Ovary (tissue), 10 donors: ENCODE measurements at regions of chr3 and their contacts with region 1.

Region 1: DNA sequence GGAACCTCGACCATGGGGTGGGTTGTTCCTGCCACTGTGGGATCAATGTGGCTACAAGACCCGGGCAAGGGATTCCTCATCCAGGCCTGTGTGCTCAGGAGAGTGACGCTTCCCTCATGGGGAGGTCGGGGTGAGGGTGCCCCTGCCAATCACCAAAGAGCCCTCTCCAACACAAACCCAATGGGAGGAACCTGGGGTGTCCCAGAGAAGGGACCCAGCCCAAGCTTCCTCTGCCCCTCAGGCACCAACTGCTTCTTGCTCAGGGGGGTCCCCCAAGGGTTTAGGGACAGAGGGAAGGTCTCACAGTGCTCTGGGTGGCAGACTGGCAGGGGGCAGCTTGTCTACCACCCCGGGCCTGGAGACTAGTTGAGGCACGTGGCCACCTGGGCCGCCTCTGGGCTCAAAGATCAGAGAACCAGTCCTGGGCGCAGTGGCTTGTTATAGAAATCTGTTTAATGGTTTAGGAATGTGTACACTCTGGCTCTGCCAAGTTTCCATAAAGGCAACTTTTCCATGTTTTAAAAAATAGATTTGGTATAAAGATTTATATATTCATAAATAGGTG is 26.6 kb downstream of the GP9 start:
- DNase-seq: peak; percentile 73 to 77 (median 76)
- H3K4me3 ChIP-seq: no peak overlapping the region
- H3K27ac ChIP-seq: peak overlapping the region; percentile 85 to 90
- H3K4me1 ChIP-seq: peaks cover 6% of the 10 kb centered on the region
- H3K27me3 ChIP-seq: no peaks in the 10 kb centered on the region
- CTCF ChIP-seq: no peak
- EP300 ChIP-seq: no peak
- POLR2A ChIP-seq: no peak

Region 2: GRCh38 chr3:128969993-128970739 is 117.1 kb before region 1 on chr3:
- intact Hi-C with region 1: loop called in 1 of 4 experiments (anchors 5 kb)
- DNase-seq: peak in 4 of 5 donors; percentile 57 to 66 (median 58)
- H3K4me3 ChIP-seq: no peak overlapping the region
- H3K27ac ChIP-seq: no peak overlapping the region
- H3K4me1 ChIP-seq: no peaks in the 10 kb centered on the region
- H3K27me3 ChIP-seq: no peaks in the 10 kb centered on the region
- CTCF ChIP-seq: peak; percentile 74 to 88 (median 78)
- EP300 ChIP-seq: no peak
- POLR2A ChIP-seq: no peak

Region 3: DNA sequence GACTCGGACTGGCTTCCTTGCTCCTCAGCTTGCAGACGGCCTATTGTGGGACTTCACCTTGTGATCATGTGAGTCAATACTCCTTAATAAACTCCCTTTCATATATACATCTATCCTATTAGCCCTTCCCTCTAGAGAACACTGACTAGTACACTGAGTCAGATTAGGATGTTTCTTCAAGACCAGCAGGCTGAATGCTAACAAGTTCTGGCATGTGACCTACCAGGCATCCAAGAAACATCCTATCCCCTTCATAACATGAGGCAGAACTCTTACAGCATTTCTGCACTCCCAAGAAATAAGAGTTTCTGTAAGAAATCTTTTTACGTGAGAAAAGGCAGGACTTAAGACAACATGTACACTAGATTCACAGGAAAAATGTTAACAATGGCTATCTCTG is 102.6 kb before region 1 on chr3:
- intact Hi-C with region 1: loop called in 1 of 4 experiments (anchors 10 kb)
- DNase-seq: no peak
- H3K4me3 ChIP-seq: no peak overlapping the region
- H3K27ac ChIP-seq: no peak overlapping the region
- H3K4me1 ChIP-seq: no peaks in the 10 kb centered on the region
- H3K27me3 ChIP-seq: no peaks in the 10 kb centered on the region
- CTCF ChIP-seq: no peak
- EP300 ChIP-seq: no peak
- POLR2A ChIP-seq: no peak

Region 4: GRCh38 chr3:129289201-129289921 is 202.1 kb after region 1 on chr3:
- intact Hi-C with region 1: no loop called
- DNase-seq: no peak
- H3K4me3 ChIP-seq: no peak overlapping the region
- H3K27ac ChIP-seq: no peak overlapping the region
- H3K4me1 ChIP-seq: no peaks in the 10 kb centered on the region
- H3K27me3 ChIP-seq: no peaks in the 10 kb centered on the region
- CTCF ChIP-seq: no peak
- EP300 ChIP-seq: no peak
- POLR2A ChIP-seq: no peak